Activated T-helper 1 cell treated with anti-CD3 and anti-CD28 coated beads, Interleukin-12 subunit alpha, Interleukin-12 subunit beta, Interleukin-2, Interleukin-4 antibody, amounts not matched to agents 30 ng/mL and 10 ng/mL and 1 ng/mL, durations not matched to agents 14 hours and 24 hours and 36 hours (primary cell): ENCODE measurements at regions of chr17 and their contacts with region 1.

Region 1: GRCh38 chr17:33750943-33751701 is 458.0 kb upstream of the ASIC2 start:
- DNase-seq: peak; percentile 56
- H3K4me3 Mint-ChIP-seq: peak overlapping the region; percentile 12
- H3K27ac Mint-ChIP-seq: no peak overlapping the region
- H3K4me1 Mint-ChIP-seq: peaks cover 9% of the 10 kb centered on the region
- H3K27me3 Mint-ChIP-seq: peaks cover 11% of the 10 kb centered on the region

Region 2: GRCh38 chr17:33520426-33521330 is 230.4 kb before region 1 on chr17:
- intact Hi-C with region 1: loop called (anchors 2 kb)
- DNase-seq: peak; percentile 2
- H3K4me3 Mint-ChIP-seq: no peak overlapping the region
- H3K27ac Mint-ChIP-seq: no peak overlapping the region
- H3K4me1 Mint-ChIP-seq: no peaks in the 10 kb centered on the region
- H3K27me3 Mint-ChIP-seq: no peaks in the 10 kb centered on the region

Region 3: DNA sequence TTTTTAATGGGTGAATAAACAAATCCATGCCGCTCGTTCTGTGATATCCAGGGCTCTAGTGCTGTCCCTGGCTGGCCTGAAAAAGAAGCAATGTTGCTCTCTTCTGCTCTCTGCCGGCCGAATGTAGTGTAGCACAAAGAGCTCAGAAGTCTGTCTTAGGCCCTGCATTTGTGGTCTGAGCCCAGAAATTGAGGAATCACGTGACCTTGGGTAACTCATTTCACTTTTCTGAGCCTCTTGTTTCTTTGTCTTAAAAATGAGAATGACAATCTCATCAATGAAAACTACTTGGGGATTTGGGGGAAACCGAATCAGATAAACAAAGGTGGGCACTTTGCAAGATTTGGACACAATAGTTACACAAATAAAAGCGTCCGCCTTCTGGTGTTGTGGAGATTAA is 76.4 kb before region 1 on chr17:
- intact Hi-C with region 1: loop called (anchors 2 kb)
- DNase-seq: peak; percentile 27
- H3K4me3 Mint-ChIP-seq: no peak overlapping the region
- H3K27ac Mint-ChIP-seq: no peak overlapping the region
- H3K4me1 Mint-ChIP-seq: no peaks in the 10 kb centered on the region
- H3K27me3 Mint-ChIP-seq: no peaks in the 10 kb centered on the region

Region 4: GRCh38 chr17:33725675-33726271 is 25.3 kb before region 1 on chr17:
- intact Hi-C with region 1: loop called (anchors 1 kb)
- DNase-seq: no peak
- H3K4me3 Mint-ChIP-seq: no peak overlapping the region
- H3K27ac Mint-ChIP-seq: no peak overlapping the region
- H3K4me1 Mint-ChIP-seq: no peaks in the 10 kb centered on the region
- H3K27me3 Mint-ChIP-seq: peaks cover 1% of the 10 kb centered on the region

Region 5: DNA sequence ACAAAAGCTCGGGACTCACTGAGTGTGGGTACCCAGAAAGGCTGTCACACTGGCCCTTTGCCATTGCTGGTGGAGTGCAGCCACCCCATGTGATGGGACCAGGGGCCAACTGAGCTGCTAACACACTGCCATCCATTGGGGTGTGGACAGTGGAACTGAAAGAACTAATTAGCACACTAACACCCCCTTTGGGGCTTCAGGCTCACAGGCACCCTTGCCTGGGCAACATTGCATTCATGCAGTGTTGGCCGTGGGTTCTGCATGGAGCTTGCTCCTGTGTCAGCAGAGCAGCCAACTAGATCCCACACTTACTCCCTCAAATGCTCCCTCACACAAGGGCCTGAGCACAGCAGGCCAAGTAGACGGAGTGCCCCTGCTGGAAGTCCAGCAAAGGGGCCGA is 17.9 kb after region 1 on chr17:
- intact Hi-C with region 1: no loop called
- DNase-seq: no peak
- H3K4me3 Mint-ChIP-seq: no peak overlapping the region
- H3K27ac Mint-ChIP-seq: no peak overlapping the region
- H3K4me1 Mint-ChIP-seq: no peaks in the 10 kb centered on the region
- H3K27me3 Mint-ChIP-seq: no peaks in the 10 kb centered on the region